Left cardiac atrium (tissue), 4 donors: ENCODE measurements at regions of chr22 and their contacts with region 1.

Region 1: GRCh38 chr22:46367707-46368191 is 32.2 kb downstream of the TRMU start:
- DNase-seq: peak; percentile 72
- ATAC-seq: peak; percentile 56 to 70

Region 2: GRCh38 chr22:46196278-46196677 is 171.5 kb before region 1 on chr22:
- intact Hi-C with region 1: no loop called
- DNase-seq: peak; percentile 63
- ATAC-seq: peak; percentile 81 to 94

Region 3: DNA sequence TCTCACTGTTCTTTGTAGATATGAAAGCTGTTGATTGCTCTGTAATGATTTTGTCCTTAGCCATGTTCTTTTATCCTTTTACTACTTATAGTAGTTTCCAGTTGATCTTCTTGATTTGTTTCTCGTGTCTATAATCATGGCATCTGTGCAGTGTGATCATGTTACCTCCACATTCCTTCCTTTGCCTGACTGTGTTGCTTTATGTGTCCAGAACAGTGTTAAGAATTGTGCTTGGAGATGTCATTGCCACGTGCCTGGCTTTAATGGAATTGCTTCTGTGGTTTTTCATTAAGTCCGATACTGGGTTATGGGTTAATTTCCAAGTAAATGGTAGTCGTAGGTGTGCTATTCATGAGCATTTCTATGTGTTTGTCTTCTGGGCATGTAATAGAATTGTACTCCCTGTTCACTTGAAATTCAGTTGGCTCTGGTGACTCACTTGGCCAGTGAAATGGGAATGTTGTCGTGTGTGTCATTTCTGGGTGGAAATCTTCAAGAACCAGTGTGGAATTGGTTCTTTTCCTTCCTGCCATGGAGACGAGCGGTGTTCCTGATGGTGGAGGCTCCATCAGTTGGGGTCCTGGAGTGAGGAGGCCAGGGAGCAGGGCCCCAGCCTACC is 64.3 kb before region 1 on chr22:
- intact Hi-C with region 1: no loop called
- DNase-seq: no peak
- ATAC-seq: no peak

Region 4: GRCh38 chr22:46542011-46542985 is 174.5 kb after region 1 on chr22:
- intact Hi-C with region 1: loop called (anchors 2 to 5 kb)
- DNase-seq: peak; percentile 77
- ATAC-seq: peak; percentile 77

Region 5: GRCh38 chr22:46681010-46681409 is 313.3 kb after region 1 on chr22:
- intact Hi-C with region 1: no loop called
- DNase-seq: no peak
- ATAC-seq: no peak